WTC11 (cell line): ENCODE measurements at regions of chr11 and their contacts with region 1.

Region 1: DNA sequence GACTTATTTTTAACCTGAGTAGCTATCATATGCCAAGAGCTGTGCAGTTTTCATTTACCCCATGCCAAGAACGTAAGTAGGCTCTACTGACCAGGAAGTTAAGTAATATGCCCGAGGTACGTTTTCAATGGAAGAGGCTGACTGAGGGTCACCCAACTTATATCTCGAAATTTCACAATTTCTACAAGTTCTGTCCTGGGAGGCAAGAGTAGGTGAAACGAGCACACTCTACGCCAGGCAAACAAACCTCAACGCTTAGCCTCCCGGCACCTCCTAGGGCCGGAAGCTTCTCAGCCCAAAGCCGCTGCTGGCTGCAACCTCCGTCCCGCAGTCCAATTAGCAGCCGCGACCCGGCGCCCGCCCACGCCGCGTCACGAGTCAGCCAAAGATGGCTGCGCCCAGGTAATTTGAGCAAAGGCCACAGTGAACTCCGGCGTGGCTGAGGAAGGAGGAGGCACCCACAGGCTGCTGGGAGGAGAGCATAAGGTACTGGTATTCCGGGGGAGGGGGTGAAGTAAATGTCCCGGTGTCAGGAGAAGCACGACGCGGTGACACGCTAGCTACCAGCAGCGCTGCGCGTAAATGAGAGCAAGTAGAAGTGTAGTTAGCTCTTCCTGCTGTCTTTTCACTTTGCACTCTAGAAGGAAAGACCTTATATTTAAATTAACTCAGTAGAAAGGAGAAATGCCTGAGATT is at the start of gene TMEM126A:
- DNase-seq: peak; percentile 90
- ATAC-seq: peak; percentile 93
- H3K4me3 Mint-ChIP-seq: peak within 1 kb of the TSS; percentile 91
- H3K27ac Mint-ChIP-seq: peak within 1 kb of the TSS; percentile 95
- H3K4me1 Mint-ChIP-seq: peaks cover 32% of the 10 kb centered on the region
- H3K27me3 Mint-ChIP-seq: no peaks in the 10 kb centered on the region
- CTCF ChIP-seq: no peak
- total RNA-seq, gene TMEM126A: 34.6 to 37.2 TPM (median 36.9 TPM) in 3 replicates

Region 2: GRCh38 chr11:85483861-85484260 is 163.9 kb before region 1 on chr11:
- CTCF ChIA-PET with region 1: no interaction called
- POLR2A ChIA-PET with region 1: no interaction called
- DNase-seq: no peak
- ATAC-seq: no peak
- H3K4me3 Mint-ChIP-seq: no peak overlapping the region
- H3K27ac Mint-ChIP-seq: no peak overlapping the region
- H3K4me1 Mint-ChIP-seq: peaks cover 16% of the 10 kb centered on the region
- H3K27me3 Mint-ChIP-seq: no peaks in the 10 kb centered on the region; the same call in 1 of the 2 replicates
- CTCF ChIP-seq: no peak

Region 3: GRCh38 chr11:85627998-85628770 is 19.6 kb before region 1 on chr11 and contains the start of gene TMEM126B:
- CTCF ChIA-PET with region 1: no interaction called
- POLR2A ChIA-PET with region 1: interaction called, 14 read pairs
- DNase-seq: peak; percentile 97
- ATAC-seq: peak; percentile 99
- H3K4me3 Mint-ChIP-seq: peak within 1 kb of the TSS; percentile 100
- H3K27ac Mint-ChIP-seq: peak within 1 kb of the TSS; percentile 98
- H3K4me1 Mint-ChIP-seq: peaks cover 28% of the 10 kb centered on the region
- H3K27me3 Mint-ChIP-seq: no peaks in the 10 kb centered on the region
- CTCF ChIP-seq: no peak
- total RNA-seq, gene TMEM126B: 52.8 to 65.8 TPM (median 63.8 TPM) in 3 replicates

Region 4: GRCh38 chr11:85664615-85665481 is 17.1 kb after region 1 on chr11 and contains the start of gene CREBZF:
- CTCF ChIA-PET with region 1: interaction called, 4 read pairs
- POLR2A ChIA-PET with region 1: interaction called, 24 read pairs
- DNase-seq: peak; percentile 94
- ATAC-seq: peak; percentile 93
- H3K4me3 Mint-ChIP-seq: peak within 1 kb of the TSS; percentile 96
- H3K27ac Mint-ChIP-seq: peak within 1 kb of the TSS; percentile 96
- H3K4me1 Mint-ChIP-seq: peaks cover 28% of the 10 kb centered on the region
- H3K27me3 Mint-ChIP-seq: peaks cover 1% of the 10 kb centered on the region
- CTCF ChIP-seq: no peak
- total RNA-seq, gene CREBZF: 46.9 to 54.6 TPM (median 48.6 TPM) in 3 replicates